Activated CD4-positive, alpha-beta T cell treated with anti-CD3 and anti-CD28 coated beads for 36 hours (primary cell): ENCODE measurements at regions of chr3 and their contacts with region 1.

Region 1: GRCh38 chr3:15291589-15292541 is 40.5 kb downstream of the SH3BP5 start:
- DNase-seq: peak; percentile 77
- ATAC-seq: peak; percentile 82
- H3K4me3 Mint-ChIP-seq: no peak overlapping the region
- H3K27ac Mint-ChIP-seq: peak overlapping the region; percentile 70
- H3K4me1 Mint-ChIP-seq: peaks cover 68% of the 10 kb centered on the region
- H3K27me3 Mint-ChIP-seq: no peaks in the 10 kb centered on the region

Region 2: DNA sequence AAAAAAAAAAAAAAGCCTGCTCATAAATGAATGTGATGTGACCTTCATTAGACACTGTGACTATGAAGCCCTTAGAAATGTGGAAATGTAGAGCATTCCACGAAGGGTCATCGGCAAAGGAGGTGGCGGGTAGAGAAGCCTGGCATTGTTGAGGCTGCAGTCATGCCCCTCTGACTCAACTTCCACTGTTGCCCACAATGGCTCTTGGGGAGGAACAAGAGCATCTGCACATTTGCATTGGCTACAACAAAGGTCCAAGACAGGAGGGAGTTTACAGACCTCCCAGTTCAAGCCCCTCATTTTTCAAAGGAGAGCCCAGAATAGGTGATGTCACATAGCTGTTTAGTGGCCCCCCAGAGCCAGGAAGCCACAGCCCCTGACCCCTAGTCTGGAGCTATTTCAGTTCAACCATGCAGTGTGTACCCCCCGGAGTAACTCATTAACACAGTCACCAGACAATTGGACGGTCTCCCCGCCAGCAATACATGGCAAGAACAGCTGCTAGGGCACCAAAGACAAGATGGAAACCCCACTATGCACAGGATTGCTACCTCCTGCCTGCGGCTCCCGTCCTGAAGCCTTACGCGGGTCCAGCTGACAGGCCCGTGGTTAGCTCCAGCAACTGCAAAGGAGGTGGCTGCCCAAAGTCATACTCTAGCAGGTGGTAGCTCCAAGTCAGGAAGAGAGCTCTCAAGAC is 15.7 kb before region 1 on chr3:
- CTCF ChIA-PET with region 1: interaction called, 6 read pairs
- POLR2A ChIA-PET with region 1: interaction called, 7 read pairs
- intact Hi-C with region 1: loop called (anchors 2 kb)
- DNase-seq: no peak
- ATAC-seq: no peak
- H3K4me3 Mint-ChIP-seq: no peak overlapping the region
- H3K27ac Mint-ChIP-seq: peak overlapping the region; percentile 32
- H3K4me1 Mint-ChIP-seq: peaks cover 83% of the 10 kb centered on the region
- H3K27me3 Mint-ChIP-seq: peaks cover 10% of the 10 kb centered on the region

Region 3: GRCh38 chr3:15361494-15362212 is 69.8 kb after region 1 on chr3:
- CTCF ChIA-PET with region 1: interaction called, 6 read pairs
- POLR2A ChIA-PET with region 1: no interaction called
- intact Hi-C with region 1: loop called (anchors 1 to 2 kb)
- DNase-seq: peak; percentile 83
- ATAC-seq: peak; percentile 76
- H3K4me3 Mint-ChIP-seq: peak overlapping the region; percentile 53
- H3K27ac Mint-ChIP-seq: peak overlapping the region; percentile 87
- H3K4me1 Mint-ChIP-seq: peaks cover 38% of the 10 kb centered on the region
- H3K27me3 Mint-ChIP-seq: peaks cover 2% of the 10 kb centered on the region